Tibial artery (tissue), 4 donors: ENCODE measurements at regions of chr5 and their contacts with region 1.

Region 1: DNA sequence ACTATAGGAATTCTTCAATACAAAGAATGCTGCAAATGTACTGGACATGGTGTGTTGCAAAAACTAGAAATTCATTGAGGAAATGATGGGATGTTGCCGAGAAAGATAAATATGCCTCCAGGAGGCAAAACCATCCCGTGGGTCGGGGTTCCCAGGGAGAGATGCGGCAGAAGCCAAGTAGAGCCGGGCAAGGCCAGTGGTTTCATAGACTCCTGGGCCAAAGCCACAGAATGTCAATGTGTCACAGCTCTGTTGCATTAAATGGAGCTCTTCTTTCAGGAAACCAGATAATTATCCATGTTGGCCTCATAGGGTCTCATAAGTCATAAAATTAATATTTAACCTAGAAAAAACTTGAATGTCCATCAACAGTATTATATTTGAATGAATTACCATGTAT is 419.5 kb upstream of the CDH10 start:
- DNase-seq: no peak
- H3K4me3 ChIP-seq: no peak overlapping the region
- H3K27ac ChIP-seq: no peak overlapping the region
- H3K4me1 ChIP-seq: no peaks in the 10 kb centered on the region
- H3K27me3 ChIP-seq: no peaks in the 10 kb centered on the region
- CTCF ChIP-seq: no peak

Region 2: DNA sequence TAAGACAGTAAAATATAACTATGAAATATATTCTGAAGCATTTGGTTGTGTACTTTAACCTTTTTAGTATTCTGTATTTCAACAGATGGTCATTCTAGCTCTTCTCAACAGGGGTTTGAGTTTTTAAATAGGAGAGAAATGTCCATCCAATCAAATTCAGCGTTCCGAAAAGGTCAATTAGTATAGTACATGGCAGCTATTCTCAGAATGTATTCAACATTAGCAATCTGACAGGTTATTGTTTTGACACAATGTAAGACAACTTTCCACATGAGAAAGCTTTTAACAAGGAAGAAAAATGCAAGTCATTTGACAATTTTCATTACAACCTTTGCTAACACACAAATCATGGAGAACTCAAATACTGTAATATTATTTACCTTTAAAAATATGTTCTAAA is 576.8 kb after region 1 on chr5:
- intact Hi-C with region 1: loop called (anchors 5 kb)
- DNase-seq: no peak
- H3K4me3 ChIP-seq: no peak overlapping the region
- H3K27ac ChIP-seq: no peak overlapping the region
- H3K4me1 ChIP-seq: no peaks in the 10 kb centered on the region
- H3K27me3 ChIP-seq: no peaks in the 10 kb centered on the region
- CTCF ChIP-seq: no peak